Natural killer cell (primary cell): ENCODE measurements at regions of chr10 and their contacts with region 1.

Region 1: DNA sequence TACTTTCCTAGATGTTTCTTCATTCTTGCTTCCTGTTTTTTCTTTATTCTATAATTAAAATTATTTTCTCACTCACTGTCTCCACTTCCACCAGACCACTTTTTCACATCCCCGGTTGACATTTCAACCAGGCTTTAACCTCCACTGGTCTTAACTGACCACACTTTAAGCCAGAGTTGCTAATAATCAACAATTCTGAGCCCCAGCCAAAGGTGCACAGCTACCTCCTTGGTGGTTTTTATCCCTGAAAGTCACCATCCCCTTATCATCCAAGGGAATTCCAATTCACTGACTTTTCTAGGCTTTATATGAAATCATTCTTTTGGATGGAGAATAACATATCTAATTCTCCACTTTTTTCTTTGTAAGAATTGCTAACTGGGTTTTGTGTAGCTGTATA is 138.9 kb downstream of the FRMD4A start:
- DNase-seq: no peak
- ATAC-seq: no peak
- H3K4me3 ChIP-seq: no peak overlapping the region
- H3K4me3 Mint-ChIP-seq: no peak overlapping the region
- H3K27ac ChIP-seq: no peak overlapping the region
- H3K27ac Mint-ChIP-seq: no peak overlapping the region
- H3K4me1 ChIP-seq: no peaks in the 10 kb centered on the region
- H3K4me1 Mint-ChIP-seq: no peaks in the 10 kb centered on the region
- H3K27me3 ChIP-seq: peaks cover 5% of the 10 kb centered on the region
- H3K27me3 Mint-ChIP-seq: peaks cover 21 to 60% of the 10 kb centered on the region in 2 donors
- CTCF ChIP-seq: no peak

Region 2: GRCh38 chr10:14024329-14025202 is 167.3 kb before region 1 on chr10:
- intact Hi-C with region 1: no loop called
- DNase-seq: no peak
- ATAC-seq: no peak
- H3K4me3 ChIP-seq: no peak overlapping the region
- H3K4me3 Mint-ChIP-seq: no peak overlapping the region
- H3K27ac ChIP-seq: no peak overlapping the region
- H3K27ac Mint-ChIP-seq: no peak overlapping the region
- H3K4me1 ChIP-seq: no peaks in the 10 kb centered on the region
- H3K4me1 Mint-ChIP-seq: no peaks in the 10 kb centered on the region
- H3K27me3 ChIP-seq: peaks cover 4% of the 10 kb centered on the region
- H3K27me3 Mint-ChIP-seq: peaks cover 25 to 48% of the 10 kb centered on the region in 2 donors
- CTCF ChIP-seq: no peak

Region 3: DNA sequence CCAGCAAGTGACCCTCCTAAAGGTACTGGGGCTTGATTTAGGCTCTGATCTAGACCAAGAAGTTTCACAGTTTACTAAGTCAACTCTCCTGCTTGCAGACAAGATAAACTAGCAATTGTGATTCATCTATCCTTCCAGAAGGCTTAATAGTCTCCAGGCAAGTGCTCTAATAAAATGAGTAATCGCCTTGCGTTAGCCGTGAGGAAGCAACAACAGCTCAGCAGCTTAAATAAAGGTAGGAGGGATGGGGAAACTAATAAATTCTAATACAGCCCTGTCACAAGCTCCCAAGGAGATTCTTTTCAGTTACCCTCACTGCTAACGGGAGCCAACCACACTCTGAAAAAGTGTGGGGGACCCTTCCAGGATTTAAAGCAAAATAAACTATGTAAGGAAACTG is 90.4 kb after region 1 on chr10:
- intact Hi-C with region 1: no loop called
- DNase-seq: no peak
- ATAC-seq: no peak
- H3K4me3 ChIP-seq: no peak overlapping the region
- H3K4me3 Mint-ChIP-seq: no peak overlapping the region
- H3K27ac ChIP-seq: no peak overlapping the region
- H3K27ac Mint-ChIP-seq: no peak overlapping the region
- H3K4me1 ChIP-seq: no peaks in the 10 kb centered on the region
- H3K4me1 Mint-ChIP-seq: no peaks in the 10 kb centered on the region
- H3K27me3 ChIP-seq: no peaks in the 10 kb centered on the region
- H3K27me3 Mint-ChIP-seq: peaks cover 11 to 18% of the 10 kb centered on the region in 2 donors
- CTCF ChIP-seq: no peak

Region 4: DNA sequence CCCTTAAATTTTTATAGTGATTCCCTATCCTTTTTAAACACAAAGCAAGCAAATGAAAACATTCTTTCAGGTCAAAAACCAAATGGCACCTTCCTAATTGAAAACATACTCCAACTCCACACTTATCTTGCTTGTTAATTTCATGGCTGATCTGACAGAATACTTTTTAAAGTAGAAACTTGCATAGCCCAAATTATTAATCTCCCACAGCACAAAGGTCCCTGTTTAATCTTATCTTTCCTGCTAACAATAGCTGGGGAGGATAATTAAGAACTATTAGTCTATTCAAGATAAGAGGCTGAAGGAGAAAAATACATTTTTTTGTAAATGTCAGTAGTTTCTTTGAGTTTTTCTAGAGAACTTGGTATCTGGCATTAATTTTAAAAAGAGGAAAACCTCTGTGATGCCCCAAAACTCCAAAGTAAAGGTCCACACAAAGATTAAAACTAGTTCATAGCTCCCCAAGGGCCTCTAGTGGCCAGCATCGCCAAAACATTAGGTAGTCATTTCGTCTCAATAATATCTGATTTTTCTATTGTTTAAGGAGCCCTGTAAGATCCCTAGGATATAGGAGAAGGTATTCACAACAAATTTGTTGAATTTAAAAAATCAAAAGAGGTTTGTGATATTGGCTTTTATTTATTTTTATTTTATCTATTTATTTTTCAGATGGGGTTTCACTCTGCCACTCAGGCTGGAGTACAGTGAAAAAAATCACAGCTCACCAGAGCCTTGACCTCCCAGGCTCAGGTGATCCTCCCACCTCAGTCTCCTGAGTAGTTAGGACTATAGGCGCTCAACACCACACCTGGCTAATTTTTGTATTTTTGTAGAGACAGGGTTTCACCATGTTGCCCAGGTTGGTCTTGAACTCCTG is 631.2 kb after region 1 on chr10:
- intact Hi-C with region 1: loop called (anchors 10 kb)
- DNase-seq: peak in 1 of 2 donors; percentile 69
- ATAC-seq: peak in 2 of 3 donors; percentile 64 to 67
- H3K4me3 ChIP-seq: no peak overlapping the region
- H3K4me3 Mint-ChIP-seq: no peak overlapping the region
- H3K27ac ChIP-seq: no peak overlapping the region
- H3K27ac Mint-ChIP-seq: no peak overlapping the region
- H3K4me1 ChIP-seq: no peaks in the 10 kb centered on the region
- H3K4me1 Mint-ChIP-seq: peaks cover 5% of the 10 kb centered on the region in 2 donors
- H3K27me3 ChIP-seq: no peaks in the 10 kb centered on the region
- H3K27me3 Mint-ChIP-seq: peaks cover 0 to 2% of the 10 kb centered on the region in 2 donors
- CTCF ChIP-seq: peak; percentile 76

Region 5: GRCh38 chr10:14971867-14972448 is 780.1 kb after region 1 on chr10:
- intact Hi-C with region 1: loop called (anchors 2 kb)
- DNase-seq: peak in 1 of 2 donors; percentile 72
- ATAC-seq: no peak
- H3K4me3 ChIP-seq: no peak overlapping the region
- H3K4me3 Mint-ChIP-seq: no peak overlapping the region
- H3K27ac ChIP-seq: no peak overlapping the region
- H3K27ac Mint-ChIP-seq: no peak overlapping the region
- H3K4me1 ChIP-seq: no peaks in the 10 kb centered on the region
- H3K4me1 Mint-ChIP-seq: peaks cover 0 to 8% of the 10 kb centered on the region in 2 donors
- H3K27me3 ChIP-seq: no peaks in the 10 kb centered on the region
- H3K27me3 Mint-ChIP-seq: peaks cover 8 to 11% of the 10 kb centered on the region in 2 donors
- CTCF ChIP-seq: peak; percentile 61